GM12878 (cell line): ENCODE measurements at regions of chr6 and their contacts with region 1.

Region 1: DNA sequence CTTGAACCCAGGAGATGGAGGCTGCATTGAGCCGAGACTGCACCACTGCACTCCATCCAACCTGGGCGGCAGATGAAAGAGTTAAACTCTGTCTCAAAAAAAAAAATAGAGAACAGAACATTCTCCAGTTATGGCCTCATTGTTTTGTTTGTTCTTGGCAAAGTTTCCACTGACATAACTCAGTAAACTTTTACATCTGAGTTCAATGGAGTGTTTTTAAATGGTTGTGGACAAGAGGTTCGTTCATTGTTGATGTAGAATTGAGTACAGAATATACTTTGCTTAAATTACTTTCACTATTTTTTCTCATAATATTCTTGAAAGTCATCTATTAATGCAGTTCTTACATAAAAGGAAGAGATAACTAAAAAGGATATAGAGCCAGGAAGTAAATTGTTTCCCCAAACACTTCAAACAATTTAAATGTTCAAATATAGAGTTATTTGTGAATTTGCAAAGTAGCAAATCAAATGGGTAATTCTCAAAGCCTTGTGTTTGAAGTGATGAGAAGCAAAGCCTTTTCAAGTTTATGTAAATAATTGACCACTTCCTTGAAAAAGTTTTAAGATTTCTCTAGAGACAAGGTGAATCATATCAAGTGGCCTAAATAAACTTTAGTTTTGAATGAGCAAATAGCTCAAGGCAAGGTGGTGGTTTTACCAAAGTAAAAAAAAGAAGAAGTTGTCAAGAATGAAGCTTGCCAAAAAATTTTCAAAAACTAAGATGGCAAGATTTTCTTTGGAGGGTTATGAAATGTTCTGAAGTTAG is 42.4 kb upstream of the IFNGR1 start:
- DNase-seq: peak; percentile 72
- ATAC-seq: peak; percentile 77
- H3K4me3 ChIP-seq: no peak overlapping the region; the same call in 1 of the 2 replicates
- H3K27ac ChIP-seq: peak overlapping the region; percentile 54
- H3K4me1 ChIP-seq: peaks cover 13% of the 10 kb centered on the region
- H3K27me3 ChIP-seq: no peaks in the 10 kb centered on the region
- CTCF ChIP-seq: no peak
- EP300 ChIP-seq: peak; percentile 52 to 84; a peak in 3 of 4 replicates
- POLR2A ChIP-seq: no peak
- RAD21 ChIP-seq: no peak

Region 2: GRCh38 chr6:137210903-137211302 is 50.7 kb before region 1 on chr6:
- CTCF ChIA-PET with region 1: interaction called, 4 read pairs
- POLR2A ChIA-PET with region 1: no interaction called
- RAD21 ChIA-PET with region 1: no interaction called
- SMC1A ChIA-PET with region 1: interaction called, 12 read pairs
- in situ Hi-C with region 1: no loop called
- intact Hi-C with region 1: no loop called
- DNase-seq: no peak
- ATAC-seq: no peak
- H3K4me3 ChIP-seq: no peak overlapping the region
- H3K27ac ChIP-seq: no peak overlapping the region
- H3K4me1 ChIP-seq: peaks cover 9% of the 10 kb centered on the region; the same call in 1 of the 2 replicates
- H3K27me3 ChIP-seq: no peaks in the 10 kb centered on the region
- CTCF ChIP-seq: no peak
- EP300 ChIP-seq: no peak
- POLR2A ChIP-seq: no peak
- RAD21 ChIP-seq: no peak

Region 3: GRCh38 chr6:137224799-137225198 is 36.8 kb before region 1 on chr6:
- CTCF ChIA-PET with region 1: interaction called, 4 read pairs
- POLR2A ChIA-PET with region 1: interaction called, 4 read pairs
- RAD21 ChIA-PET with region 1: interaction called, 9 read pairs
- SMC1A ChIA-PET with region 1: interaction called, 74 read pairs
- in situ Hi-C with region 1: no loop called
- intact Hi-C with region 1: loop called (anchors 2 kb)
- DNase-seq: peak; percentile 70
- ATAC-seq: peak; percentile 76
- H3K4me3 ChIP-seq: no peak overlapping the region
- H3K27ac ChIP-seq: peak overlapping the region; percentile 84
- H3K4me1 ChIP-seq: peaks cover 67% of the 10 kb centered on the region
- H3K27me3 ChIP-seq: no peaks in the 10 kb centered on the region
- CTCF ChIP-seq: no peak
- EP300 ChIP-seq: 0 out of 4 replicates have a peak, but pooled peaks of 1 of the 2 experiments have one; percentile 48
- POLR2A ChIP-seq: no peak
- RAD21 ChIP-seq: no peak

Region 4: DNA sequence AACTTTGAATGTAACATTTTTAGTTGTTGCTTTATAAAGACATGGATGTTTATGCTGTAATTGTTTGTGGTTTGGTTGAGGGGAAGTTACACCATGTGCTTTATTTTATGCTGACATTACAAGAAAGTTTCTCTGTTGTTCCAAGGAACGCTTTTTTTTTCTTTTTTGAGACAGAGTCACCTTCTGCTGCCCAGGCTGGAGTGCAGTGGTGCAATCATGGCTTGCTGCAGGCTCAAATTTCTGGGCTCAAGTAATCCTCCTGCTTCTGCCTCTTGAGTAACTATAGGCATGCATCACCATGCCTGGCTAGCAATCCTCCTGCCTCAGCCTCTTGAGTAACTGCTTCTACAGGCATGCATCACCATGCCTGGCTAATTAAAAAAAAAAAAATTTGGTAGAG is 21.4 kb before region 1 on chr6:
- CTCF ChIA-PET with region 1: interaction called, 4 read pairs
- POLR2A ChIA-PET with region 1: interaction called, 5 read pairs
- RAD21 ChIA-PET with region 1: interaction called, 6 read pairs
- SMC1A ChIA-PET with region 1: interaction called, 74 read pairs
- in situ Hi-C with region 1: no loop called
- intact Hi-C with region 1: no loop called
- DNase-seq: no peak
- ATAC-seq: no peak
- H3K4me3 ChIP-seq: no peak overlapping the region
- H3K27ac ChIP-seq: no peak overlapping the region
- H3K4me1 ChIP-seq: no peaks in the 10 kb centered on the region
- H3K27me3 ChIP-seq: no peaks in the 10 kb centered on the region
- CTCF ChIP-seq: no peak
- EP300 ChIP-seq: no peak
- POLR2A ChIP-seq: no peak
- RAD21 ChIP-seq: no peak

Region 5: GRCh38 chr6:137631323-137631722 is 369.7 kb after region 1 on chr6:
- CTCF ChIA-PET with region 1: no interaction called
- POLR2A ChIA-PET with region 1: no interaction called
- RAD21 ChIA-PET with region 1: no interaction called
- SMC1A ChIA-PET with region 1: no interaction called
- in situ Hi-C with region 1: loop called (anchors 5 kb)
- intact Hi-C with region 1: no loop called
- DNase-seq: no peak
- ATAC-seq: peak; percentile 81
- H3K4me3 ChIP-seq: no peak overlapping the region
- H3K27ac ChIP-seq: peak overlapping the region; percentile 76
- H3K4me1 ChIP-seq: peaks cover 46% of the 10 kb centered on the region
- H3K27me3 ChIP-seq: no peaks in the 10 kb centered on the region
- CTCF ChIP-seq: no peak
- EP300 ChIP-seq: no peak
- POLR2A ChIP-seq: no peak
- RAD21 ChIP-seq: no peak